ENCODE measurements at regions of chr12 and their contacts with region 1.

Region 1: DNA sequence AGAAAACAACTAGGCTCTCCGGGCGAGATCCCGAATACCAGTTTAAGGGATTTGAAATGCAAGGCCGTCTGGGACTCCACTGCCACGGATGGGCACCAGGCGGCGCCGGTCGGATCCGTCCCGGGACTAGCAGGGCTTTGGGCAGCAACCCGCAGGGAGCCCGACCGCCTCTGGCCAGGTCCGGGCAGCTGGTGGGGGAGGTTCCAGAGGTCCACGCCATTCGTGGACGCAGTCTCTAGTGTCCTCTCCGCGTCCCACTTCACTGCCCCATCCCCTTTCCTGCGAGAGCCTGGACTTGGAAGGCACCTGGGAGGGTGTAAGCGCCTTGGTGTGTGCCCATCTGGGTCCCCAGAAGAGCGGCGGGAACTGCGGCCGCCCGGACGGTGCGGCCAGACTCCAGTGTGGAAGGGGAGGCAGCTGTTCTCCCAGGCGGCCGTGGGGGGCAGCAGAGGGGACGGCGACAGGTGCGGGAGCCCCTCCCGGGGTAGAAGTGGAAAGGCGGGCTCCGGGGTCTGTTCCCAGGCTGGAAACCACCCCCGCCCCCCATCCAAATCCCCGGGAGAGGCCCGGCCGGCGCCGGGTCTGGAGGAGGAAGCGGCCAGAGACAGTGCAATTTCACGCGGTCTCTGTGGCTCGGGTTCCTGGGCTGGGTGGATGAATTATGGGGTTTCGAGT is 838 bp upstream of the ERBB3 start:
- DNase-seq: peak; percentile 94
- H3K4me3 ChIP-seq: peak overlapping the region; percentile 53 to 71
- H3K27ac ChIP-seq: peak overlapping the region; percentile 36 to 55
- H3K4me1 ChIP-seq: peaks cover 0 to 6% of the 10 kb centered on the region in 2 experiments; a peak in 1 of 4 replicates
- H3K27me3 ChIP-seq: no peaks in the 10 kb centered on the region
- CTCF ChIP-seq: peak; percentile 69
- EP300 ChIP-seq: no peak
- RAD21 ChIP-seq: peak; percentile 52

Region 2: DNA sequence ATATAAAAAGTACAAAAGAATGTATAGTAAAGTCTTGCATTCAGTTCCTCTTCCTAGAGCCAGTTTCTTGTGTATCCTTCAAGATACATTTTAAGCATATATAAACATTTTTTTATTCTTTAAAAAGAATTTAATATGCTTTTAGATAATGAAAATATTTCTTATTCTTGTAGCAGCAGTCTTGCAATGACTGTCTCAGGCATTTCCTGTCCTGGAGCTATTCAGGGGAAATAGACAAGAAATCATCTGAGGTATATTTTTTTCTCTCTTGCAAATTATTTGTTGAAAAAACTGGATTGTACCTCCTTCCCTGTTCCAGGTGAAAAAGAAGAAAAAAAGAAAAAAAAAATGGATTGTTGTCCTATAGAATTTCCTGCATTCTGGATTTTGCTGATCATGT is 16.1 kb before region 1 on chr12:
- CTCF ChIA-PET with region 1: interaction called, 13 read pairs
- POLR2A ChIA-PET with region 1: no interaction called
- DNase-seq: no peak
- H3K4me3 ChIP-seq: no peak overlapping the region; a peak in 1 of 4 replicates
- H3K27ac ChIP-seq: peak overlapping the region in 1 of 2 experiments; percentile 3; a peak in 1 of 4 replicates
- H3K4me1 ChIP-seq: 0 out of 4 replicates have a peak, but pooled peaks cover 0 to 4% of the 10 kb centered on the region in 2 experiments
- H3K27me3 ChIP-seq: no peaks in the 10 kb centered on the region
- CTCF ChIP-seq: no peak
- EP300 ChIP-seq: no peak
- RAD21 ChIP-seq: no peak

Region 3: GRCh38 chr12:56104109-56104814 is 25.1 kb after region 1 on chr12 and contains the start of gene PA2G4:
- CTCF ChIA-PET with region 1: interaction called, 7 read pairs
- POLR2A ChIA-PET with region 1: interaction called, 15 read pairs
- DNase-seq: peak; percentile 95
- H3K4me3 ChIP-seq: peak within 1 kb of the TSS; percentile 89 to 90
- H3K27ac ChIP-seq: peak within 1 kb of the TSS; percentile 76 to 89
- H3K4me1 ChIP-seq: peaks cover 5 to 19% of the 10 kb centered on the region in 2 experiments; a peak in 3 of 4 replicates
- H3K27me3 ChIP-seq: no peaks in the 10 kb centered on the region
- CTCF ChIP-seq: no peak
- EP300 ChIP-seq: no peak
- RAD21 ChIP-seq: no peak
- polyA plus RNA-seq, gene PA2G4: 207 and 213 TPM in 2 replicates

Region 4: DNA sequence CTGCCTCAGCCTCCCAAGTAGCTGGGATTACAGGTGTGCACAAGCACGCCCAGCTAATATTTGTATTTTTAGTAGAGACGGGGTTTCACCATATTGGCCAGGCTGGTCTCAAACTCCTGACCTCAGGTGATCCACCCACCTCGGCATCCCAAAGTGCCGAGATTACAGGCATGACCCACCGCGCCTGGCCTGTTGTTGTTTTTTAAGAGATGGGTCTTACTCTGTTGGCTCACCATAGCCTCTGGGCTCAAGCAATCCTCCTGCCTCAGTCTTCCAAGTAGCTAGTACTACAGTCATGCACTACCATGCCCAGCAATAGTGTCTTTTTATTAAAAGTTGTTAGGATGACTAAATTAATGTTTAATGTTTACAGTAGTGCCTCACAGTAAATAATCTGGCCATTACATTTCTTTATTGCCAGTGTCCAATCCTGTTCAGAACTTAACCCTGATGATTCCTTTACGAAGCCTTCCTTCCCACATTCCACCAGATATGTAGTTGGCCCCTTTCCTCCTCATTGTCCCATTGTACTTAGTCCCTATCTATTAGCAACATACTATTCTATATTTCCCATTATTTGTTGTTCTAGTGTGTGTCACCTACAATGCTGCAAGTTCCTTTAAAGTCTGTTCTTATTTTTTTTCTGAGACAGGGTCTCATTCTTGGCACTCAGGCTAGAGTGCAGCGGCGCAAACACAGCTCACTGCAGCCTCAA is 119.0 kb after region 1 on chr12:
- CTCF ChIA-PET with region 1: no interaction called
- POLR2A ChIA-PET with region 1: no interaction called
- DNase-seq: no peak
- H3K4me3 ChIP-seq: no peak overlapping the region
- H3K27ac ChIP-seq: peak overlapping the region in 1 of 2 experiments; percentile 77; a peak in 2 of 4 replicates
- H3K4me1 ChIP-seq: peaks cover 0 to 14% of the 10 kb centered on the region in 2 experiments; a peak in 1 of 4 replicates
- H3K27me3 ChIP-seq: no peaks in the 10 kb centered on the region
- CTCF ChIP-seq: no peak
- EP300 ChIP-seq: no peak
- RAD21 ChIP-seq: no peak

Measured in SK-N-SH (cell line).